ENCODE measurements at regions of chrX and their contacts with region 1.

Region 1: DNA sequence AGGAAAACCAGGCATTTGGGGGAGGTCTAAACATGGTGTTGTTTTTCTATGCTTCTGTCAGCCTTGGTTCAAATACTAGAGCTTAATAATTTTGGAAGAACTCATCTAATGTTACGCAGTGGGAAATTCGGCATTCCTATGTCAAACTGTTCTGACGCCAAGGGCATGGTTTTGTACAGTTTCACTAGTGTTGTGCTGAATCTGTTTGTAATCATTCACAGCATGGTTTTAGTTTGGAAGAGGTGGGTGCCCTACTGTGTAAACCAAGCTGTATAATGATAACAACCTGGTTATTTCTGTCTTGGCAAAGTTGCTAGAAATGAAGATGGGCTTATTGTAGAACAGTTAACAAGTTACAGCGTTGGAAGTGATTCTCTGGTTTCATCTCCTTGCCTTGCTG is 5.2 kb downstream of the DDX3X start:
- DNase-seq: no peak
- ATAC-seq: no peak
- H3K4me3 Mint-ChIP-seq: no peak overlapping the region
- H3K27ac Mint-ChIP-seq: no peak overlapping the region
- H3K4me1 Mint-ChIP-seq: peaks cover 38% of the 10 kb centered on the region
- H3K27me3 Mint-ChIP-seq: no peaks in the 10 kb centered on the region
- CTCF ChIP-seq: no peak

Region 2: GRCh38 chrX:40392599-40392998 is 946.5 kb before region 1 on chrX:
- CTCF ChIA-PET with region 1: no interaction called
- POLR2A ChIA-PET with region 1: no interaction called
- intact Hi-C with region 1: no loop called
- DNase-seq: no peak
- ATAC-seq: no peak
- H3K4me3 Mint-ChIP-seq: no peak overlapping the region
- H3K27ac Mint-ChIP-seq: no peak overlapping the region
- H3K4me1 Mint-ChIP-seq: no peaks in the 10 kb centered on the region
- H3K27me3 Mint-ChIP-seq: no peaks in the 10 kb centered on the region
- CTCF ChIP-seq: no peak

Region 3: DNA sequence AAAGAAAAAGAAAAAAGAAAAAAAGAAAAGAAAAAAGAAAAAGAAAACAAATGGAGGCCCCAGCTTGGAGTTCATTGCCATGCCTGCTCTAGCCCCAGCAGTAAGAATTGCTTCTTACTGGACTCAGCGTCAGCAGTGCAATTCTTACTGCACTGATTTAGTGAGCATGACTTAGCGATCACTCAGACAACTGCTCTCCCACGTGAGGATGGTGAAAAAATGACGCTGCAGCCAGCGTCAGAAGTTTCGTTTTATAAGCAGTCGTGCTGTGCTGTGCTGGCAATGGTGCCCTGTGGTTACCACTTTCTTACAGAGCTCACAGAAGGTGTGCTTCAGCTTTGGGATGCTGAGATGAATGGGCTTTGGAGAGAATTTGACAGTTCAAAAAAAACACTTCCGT is 73.5 kb before region 1 on chrX:
- CTCF ChIA-PET with region 1: no interaction called
- POLR2A ChIA-PET with region 1: interaction called, 10 read pairs
- intact Hi-C with region 1: no loop called
- DNase-seq: no peak
- ATAC-seq: peak; percentile 90
- H3K4me3 Mint-ChIP-seq: peak overlapping the region; percentile 45
- H3K27ac Mint-ChIP-seq: no peak overlapping the region
- H3K4me1 Mint-ChIP-seq: peaks cover 5% of the 10 kb centered on the region
- H3K27me3 Mint-ChIP-seq: no peaks in the 10 kb centered on the region
- CTCF ChIP-seq: no peak